ENCODE measurements at regions of chr4 and their contacts with region 1.

Region 1: DNA sequence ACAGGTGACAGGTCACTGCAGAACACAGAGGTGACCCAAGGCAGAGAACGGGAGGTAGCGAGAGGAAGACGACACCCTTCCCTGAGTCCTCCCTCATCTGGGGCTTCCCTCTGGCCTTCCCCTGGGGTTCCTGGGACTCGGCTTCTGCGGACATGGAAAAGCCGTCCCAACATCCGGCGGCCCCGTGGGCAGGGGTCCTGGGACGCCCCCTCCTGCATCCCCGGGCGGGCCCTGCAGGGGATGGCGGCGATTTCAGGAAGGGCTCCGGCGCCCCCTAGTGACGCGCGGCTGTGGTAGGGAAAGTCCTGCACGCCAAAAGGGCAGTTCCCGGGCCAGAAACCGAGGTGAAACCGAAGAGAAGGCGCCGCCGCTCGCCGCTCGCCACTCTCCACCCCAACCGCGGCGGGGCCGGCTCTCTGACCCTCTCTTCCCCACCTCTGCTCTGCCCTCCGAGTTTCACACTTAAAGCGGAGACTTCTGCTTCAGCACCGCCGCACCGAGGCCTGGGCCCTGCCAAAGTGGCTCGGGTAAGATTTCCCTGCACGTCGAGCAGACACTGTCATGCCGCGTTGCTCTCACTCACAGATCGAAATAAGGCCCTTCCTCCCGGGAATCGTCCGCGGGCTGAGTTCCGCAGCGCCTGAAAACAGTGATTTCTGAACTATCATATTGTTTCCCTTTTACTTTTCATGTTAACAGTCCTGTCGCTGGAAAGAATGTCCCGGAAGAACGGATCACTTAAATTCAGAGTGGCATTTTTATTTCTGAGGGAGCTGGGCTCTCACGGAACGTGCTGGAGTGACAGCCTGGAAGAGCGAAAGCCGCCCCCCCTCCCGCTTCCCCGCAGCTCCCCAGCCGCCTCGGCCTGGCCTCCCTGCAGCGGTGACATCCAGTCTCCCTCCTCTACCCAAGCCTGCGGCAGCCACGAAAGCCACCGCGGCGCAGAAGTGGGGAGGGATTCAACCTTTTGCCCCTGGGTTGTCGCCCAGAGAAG is 110.6 kb downstream of the DCTD start:
- DNase-seq: no peak
- H3K4me3 ChIP-seq: peak overlapping the region; percentile 56
- H3K27ac ChIP-seq: peak overlapping the region; percentile 47
- H3K27me3 ChIP-seq: no peaks in the 10 kb centered on the region
- CTCF ChIP-seq: peak; percentile 90

Region 2: DNA sequence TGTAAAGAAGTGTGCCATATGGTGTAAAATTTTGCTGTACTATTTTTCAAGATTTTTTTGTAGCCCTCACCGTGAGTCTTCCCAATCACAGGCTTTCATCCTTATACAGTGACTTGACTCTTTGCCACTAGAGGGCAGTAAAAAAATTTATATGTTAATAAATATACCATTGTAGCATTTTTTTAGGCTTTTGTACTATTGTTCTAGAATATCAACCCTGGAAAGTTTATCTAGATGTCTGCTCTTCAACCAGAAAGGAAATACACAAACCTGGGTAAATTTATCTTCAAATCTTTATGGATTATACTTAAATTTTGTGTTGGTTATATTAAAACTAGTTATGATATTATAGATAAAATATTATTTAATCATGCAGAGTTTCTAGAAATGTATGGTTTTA is 328.1 kb before region 1 on chr4:
- CTCF ChIA-PET with region 1: interaction called, 17 read pairs
- POLR2A ChIA-PET with region 1: no interaction called
- DNase-seq: no peak
- H3K4me3 ChIP-seq: no peak overlapping the region
- H3K27ac ChIP-seq: no peak overlapping the region
- H3K27me3 ChIP-seq: no peaks in the 10 kb centered on the region
- CTCF ChIP-seq: peak; percentile 69

Region 3: DNA sequence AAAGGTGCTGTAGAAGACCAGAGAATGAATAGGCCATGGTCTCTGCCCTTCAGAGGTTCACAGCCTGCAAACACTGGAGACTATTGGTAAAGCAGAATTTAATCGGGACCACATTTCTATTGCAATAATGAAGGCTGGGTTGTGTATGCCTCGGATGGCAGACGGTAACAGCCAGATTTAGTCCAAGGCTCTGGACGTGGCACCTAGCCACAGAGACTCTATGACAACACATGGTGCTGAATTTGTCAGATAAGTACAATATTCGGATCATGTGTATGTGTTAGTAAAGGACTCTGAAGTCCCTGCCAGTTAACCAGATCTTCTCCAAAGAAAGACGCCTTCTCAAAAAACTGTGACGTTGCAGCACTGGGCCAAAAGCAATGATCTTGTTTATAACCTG is 18.4 kb before region 1 on chr4:
- CTCF ChIA-PET with region 1: interaction called, 13 read pairs
- POLR2A ChIA-PET with region 1: no interaction called
- DNase-seq: no peak
- H3K4me3 ChIP-seq: no peak overlapping the region
- H3K27ac ChIP-seq: no peak overlapping the region
- H3K27me3 ChIP-seq: no peaks in the 10 kb centered on the region
- CTCF ChIP-seq: no peak

Region 4: GRCh38 chr4:182795446-182796238 is 10.9 kb before region 1 on chr4:
- CTCF ChIA-PET with region 1: interaction called, 15 read pairs
- POLR2A ChIA-PET with region 1: no interaction called
- DNase-seq: no peak
- H3K4me3 ChIP-seq: no peak overlapping the region
- H3K27ac ChIP-seq: no peak overlapping the region
- H3K27me3 ChIP-seq: no peaks in the 10 kb centered on the region
- CTCF ChIP-seq: no peak